Activated CD4-positive, alpha-beta T cell treated with anti-CD3 and anti-CD28 coated beads, Interleukin-2, amount 10 ng/mL, durations not matched to agents 7 days and 5 days (primary cell): ENCODE measurements at regions of chr14 and their contacts with region 1.

Region 1: DNA sequence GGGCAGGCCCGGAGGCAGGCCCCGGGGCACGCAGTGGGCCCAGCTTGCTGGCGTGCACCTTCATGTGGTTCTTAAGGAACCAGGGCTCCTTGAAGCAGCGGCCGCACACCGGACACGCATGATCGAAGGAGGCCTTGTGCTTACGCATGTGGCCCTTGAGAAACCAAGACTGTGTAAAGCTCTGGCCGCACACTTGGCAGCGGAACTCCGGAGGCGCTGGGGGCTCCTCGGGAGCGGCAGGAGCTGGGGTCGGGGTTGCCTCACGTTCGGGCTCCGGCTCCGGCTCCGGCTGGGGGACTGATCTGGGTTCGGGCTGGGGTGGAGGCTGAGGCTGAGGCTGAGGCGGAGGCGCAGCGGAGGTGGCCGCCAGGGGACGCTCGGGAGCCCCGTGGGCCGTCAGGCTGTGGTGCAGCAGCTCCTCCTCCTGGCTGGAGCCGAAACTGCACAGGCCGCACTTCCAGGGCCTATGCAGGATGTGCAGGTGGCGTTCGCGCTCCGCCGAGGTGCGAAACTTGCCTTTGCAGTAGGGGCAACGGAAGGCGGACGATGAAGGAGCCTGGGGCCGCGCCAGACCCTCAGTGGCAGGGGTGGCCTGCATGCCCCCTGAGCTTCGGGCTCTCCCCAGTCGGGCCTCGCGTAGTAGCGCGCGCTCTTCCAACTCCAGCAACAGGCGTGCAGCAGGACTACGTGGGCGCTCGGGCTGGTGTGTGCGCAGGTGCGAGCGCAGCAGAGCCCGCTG is 6.0 kb downstream of the ZNF219 start:
- DNase-seq: peak; percentile 91
- H3K4me3 Mint-ChIP-seq: no peak overlapping the region
- H3K27ac Mint-ChIP-seq: no peak overlapping the region
- H3K4me1 Mint-ChIP-seq: peaks cover 24% of the 10 kb centered on the region
- H3K27me3 Mint-ChIP-seq: peaks cover 6% of the 10 kb centered on the region

Region 2: GRCh38 chr14:21014761-21015190 is 77.7 kb before region 1 on chr14:
- CTCF ChIA-PET with region 1: interaction called, 58 read pairs
- POLR2A ChIA-PET with region 1: no interaction called
- DNase-seq: peak; percentile 83
- H3K4me3 Mint-ChIP-seq: no peak overlapping the region
- H3K27ac Mint-ChIP-seq: no peak overlapping the region
- H3K4me1 Mint-ChIP-seq: no peaks in the 10 kb centered on the region
- H3K27me3 Mint-ChIP-seq: peaks cover 21% of the 10 kb centered on the region

Region 3: DNA sequence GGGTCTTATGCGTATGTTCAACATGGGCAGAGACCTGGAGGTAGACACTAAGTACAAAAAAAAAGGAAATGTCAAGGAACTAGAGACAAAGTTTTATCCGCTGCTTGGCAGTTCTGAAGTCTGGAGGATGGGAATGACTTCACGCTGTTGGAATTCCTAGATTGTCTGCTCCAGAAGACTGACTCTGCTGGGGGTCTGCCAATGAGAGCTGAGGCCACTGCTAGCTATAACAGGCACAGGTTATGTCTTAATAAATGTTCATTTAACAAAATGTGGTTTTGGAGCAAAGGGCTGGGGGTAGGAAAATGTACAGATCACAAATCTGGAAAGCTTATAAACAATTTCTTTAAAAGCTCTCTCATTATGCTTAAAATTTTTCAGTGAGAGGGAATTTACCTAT is 29.0 kb before region 1 on chr14:
- CTCF ChIA-PET with region 1: interaction called, 19 read pairs
- POLR2A ChIA-PET with region 1: no interaction called
- DNase-seq: no peak
- H3K4me3 Mint-ChIP-seq: no peak overlapping the region
- H3K27ac Mint-ChIP-seq: no peak overlapping the region
- H3K4me1 Mint-ChIP-seq: peaks cover under 1% of the 10 kb centered on the region
- H3K27me3 Mint-ChIP-seq: peaks cover 53% of the 10 kb centered on the region

Region 4: GRCh38 chr14:21081521-21082142 is 10.8 kb before region 1 on chr14:
- CTCF ChIA-PET with region 1: interaction called, 12 read pairs
- POLR2A ChIA-PET with region 1: no interaction called
- DNase-seq: no peak
- H3K4me3 Mint-ChIP-seq: no peak overlapping the region
- H3K27ac Mint-ChIP-seq: no peak overlapping the region
- H3K4me1 Mint-ChIP-seq: peaks cover 3% of the 10 kb centered on the region
- H3K27me3 Mint-ChIP-seq: peaks cover 4% of the 10 kb centered on the region

Region 5: DNA sequence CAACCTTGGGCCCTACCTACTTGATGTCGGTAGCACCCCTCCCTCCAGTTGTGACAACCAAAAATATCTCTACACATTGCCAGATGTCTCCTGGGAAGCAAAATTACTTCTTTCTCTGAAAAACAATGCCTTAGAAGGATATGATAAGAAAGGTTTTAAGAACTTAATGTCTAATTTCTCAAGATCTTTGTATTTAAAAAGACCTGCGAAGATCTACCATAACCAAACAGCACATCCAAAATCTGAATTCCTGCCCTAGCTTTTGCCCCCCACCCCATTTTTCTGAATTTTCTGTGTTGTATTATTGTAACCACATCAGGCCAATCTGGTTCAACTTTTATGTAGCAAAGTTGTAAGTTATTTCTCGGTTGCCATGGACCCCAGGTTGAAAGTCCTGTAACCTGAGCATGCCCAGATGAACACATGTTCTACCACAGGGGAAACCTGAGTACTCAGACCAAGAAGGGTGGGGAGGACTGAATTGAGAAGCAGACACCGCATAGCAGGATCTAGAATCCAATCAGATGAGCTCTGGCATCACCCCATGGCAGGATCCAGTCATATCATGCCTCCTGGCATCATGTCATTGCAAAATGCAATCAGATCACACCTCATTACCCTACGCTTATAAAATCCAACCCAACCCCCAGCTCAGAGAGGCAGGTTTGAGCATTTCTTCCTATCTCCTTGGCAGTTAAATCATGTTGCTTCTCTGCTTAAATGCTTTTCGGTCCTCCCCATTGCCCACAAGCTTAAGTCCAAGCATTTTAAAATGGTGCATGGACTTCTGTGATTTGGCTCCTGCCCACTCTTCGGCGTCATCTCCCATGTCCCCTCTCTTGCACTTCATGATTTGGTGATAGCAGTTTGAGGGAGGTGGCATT is 17.2 kb after region 1 on chr14:
- CTCF ChIA-PET with region 1: interaction called, 121 read pairs
- POLR2A ChIA-PET with region 1: interaction called, 5 read pairs
- DNase-seq: no peak
- H3K4me3 Mint-ChIP-seq: no peak overlapping the region
- H3K27ac Mint-ChIP-seq: no peak overlapping the region
- H3K4me1 Mint-ChIP-seq: peaks cover 14% of the 10 kb centered on the region
- H3K27me3 Mint-ChIP-seq: no peaks in the 10 kb centered on the region

Region 6: GRCh38 chr14:21203470-21204166 is 111.2 kb after region 1 on chr14:
- CTCF ChIA-PET with region 1: no interaction called
- POLR2A ChIA-PET with region 1: no interaction called
- DNase-seq: no peak
- H3K4me3 Mint-ChIP-seq: no peak overlapping the region
- H3K27ac Mint-ChIP-seq: peak overlapping the region; percentile 37
- H3K4me1 Mint-ChIP-seq: no peaks in the 10 kb centered on the region
- H3K27me3 Mint-ChIP-seq: no peaks in the 10 kb centered on the region